ENCODE measurements at regions of chr3 and their contacts with region 1.

Region 1: DNA sequence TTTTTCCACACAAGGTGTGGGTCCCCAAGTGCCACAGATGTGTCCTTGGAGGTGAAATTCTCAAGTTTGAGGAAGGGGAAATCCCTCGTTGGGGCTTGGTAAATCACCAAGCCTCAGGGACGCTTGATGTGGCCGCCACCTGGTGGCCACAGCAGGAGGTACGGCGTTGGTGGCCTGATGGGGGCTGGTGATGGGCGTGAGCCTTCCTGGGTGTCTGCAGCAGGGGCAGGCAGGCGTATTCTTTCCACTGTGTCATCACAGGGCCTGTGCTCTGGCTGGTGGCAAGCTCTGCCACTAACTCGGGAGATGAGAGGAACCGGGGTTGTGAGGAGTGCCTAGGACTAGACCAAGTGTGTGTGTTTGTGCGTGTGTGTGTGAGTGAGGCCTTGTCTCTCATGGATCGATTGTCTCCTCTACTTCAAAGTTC is 4.2 kb downstream of the ACOX2 start:
- DNase-seq: peak; percentile 61 to 79 (median 71)
- H3K4me3 ChIP-seq: no peak overlapping the region
- H3K27ac ChIP-seq: no peak overlapping the region
- H3K4me1 ChIP-seq: peaks cover 17% of the 10 kb centered on the region
- H3K27me3 ChIP-seq: no peaks in the 10 kb centered on the region
- CTCF ChIP-seq: peak; percentile 74 to 82 (median 81)
- EP300 ChIP-seq: no peak
- POLR2A ChIP-seq: no peak

Region 2: DNA sequence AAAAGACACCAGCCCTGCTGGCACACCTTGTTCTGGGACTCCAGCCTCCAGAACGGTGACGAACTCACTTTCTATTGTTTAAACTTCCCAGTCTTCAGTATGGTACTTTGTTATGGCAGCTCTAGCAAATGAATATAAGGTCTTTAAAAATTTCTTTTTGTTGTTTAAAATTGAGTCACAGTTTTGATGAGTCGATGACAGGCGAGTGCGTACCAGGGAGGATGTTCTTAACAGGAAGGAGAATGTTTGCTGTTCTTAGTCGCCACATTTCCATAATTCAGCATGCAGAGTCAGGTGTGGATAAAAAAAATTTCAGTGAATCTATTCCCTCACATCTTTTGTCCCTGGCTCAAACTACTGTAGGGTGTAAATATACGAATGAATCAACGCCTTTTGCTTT is 334.4 kb before region 1 on chr3:
- intact Hi-C with region 1: loop called in 1 of 4 experiments (anchors 10 kb)
- DNase-seq: peak in 1 of 5 donors; percentile 1
- H3K4me3 ChIP-seq: no peak overlapping the region
- H3K27ac ChIP-seq: peak overlapping the region in 1 of 2 donors; percentile 2
- H3K4me1 ChIP-seq: peaks cover 4% of the 10 kb centered on the region
- H3K27me3 ChIP-seq: no peaks in the 10 kb centered on the region
- CTCF ChIP-seq: no peak
- EP300 ChIP-seq: no peak
- POLR2A ChIP-seq: no peak

Region 3: DNA sequence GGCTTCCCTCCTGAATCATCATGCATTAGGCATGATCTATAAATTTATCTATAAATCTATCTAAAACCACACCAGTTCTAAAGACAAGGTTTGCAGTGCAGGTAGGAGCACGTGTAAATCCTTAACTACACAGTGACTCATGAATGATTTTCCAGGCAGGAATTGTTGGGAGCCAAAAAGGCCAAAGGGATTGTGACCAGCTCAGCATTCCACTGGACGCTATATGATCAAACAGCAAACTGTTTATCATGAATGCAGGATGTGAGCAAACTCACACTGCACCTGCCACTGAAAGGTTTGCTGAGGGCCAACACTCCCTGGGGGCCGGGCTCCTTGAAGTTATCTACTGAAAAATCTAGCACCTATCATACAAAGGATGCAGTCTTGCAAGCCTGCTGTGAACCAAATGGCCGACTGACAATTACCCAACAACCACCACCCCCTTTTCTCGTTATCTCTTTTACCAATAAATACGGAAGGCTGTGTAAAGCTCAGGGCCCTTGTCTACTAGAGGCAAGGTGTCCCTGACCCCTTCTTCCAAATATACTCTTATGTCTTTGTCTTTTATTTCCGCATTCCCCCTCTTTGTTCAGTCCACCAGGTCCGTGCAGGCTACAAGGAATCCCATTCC is 310.6 kb before region 1 on chr3:
- intact Hi-C with region 1: no loop called
- DNase-seq: no peak
- H3K4me3 ChIP-seq: no peak overlapping the region
- H3K27ac ChIP-seq: no peak overlapping the region
- H3K4me1 ChIP-seq: peaks cover 2% of the 10 kb centered on the region
- H3K27me3 ChIP-seq: no peaks in the 10 kb centered on the region
- CTCF ChIP-seq: no peak
- EP300 ChIP-seq: no peak
- POLR2A ChIP-seq: no peak

Region 4: GRCh38 chr3:58305882-58306711 is 226.7 kb before region 1 on chr3 and contains the starts of genes HTD2 and RPP14:
- intact Hi-C with region 1: loop called in 1 of 4 experiments (anchors 5 kb)
- DNase-seq: peak; percentile 99
- H3K4me3 ChIP-seq: peak within 1 kb of the TSS; percentile 77
- H3K27ac ChIP-seq: peak within 1 kb of the TSS; percentile 92 to 99
- H3K4me1 ChIP-seq: peaks cover 10% of the 10 kb centered on the region
- H3K27me3 ChIP-seq: no peaks in the 10 kb centered on the region
- CTCF ChIP-seq: peak; percentile 92 to 98 (median 97)
- EP300 ChIP-seq: no peak
- POLR2A ChIP-seq: peak; percentile 71
- total RNA-seq, gene HTD2: 7.3 to 12.0 (median 9.1) TPM
- total RNA-seq, gene RPP14: 7.9 to 16.2 (median 15.0) TPM

Region 5: GRCh38 chr3:58324391-58325390 is 208.1 kb before region 1 on chr3:
- intact Hi-C with region 1: loop called in 2 of 4 experiments (anchors 5 to 10 kb)
- DNase-seq: no peak
- H3K4me3 ChIP-seq: no peak overlapping the region
- H3K27ac ChIP-seq: peak overlapping the region in 1 of 2 donors; percentile 60
- H3K4me1 ChIP-seq: peaks cover 10% of the 10 kb centered on the region
- H3K27me3 ChIP-seq: no peaks in the 10 kb centered on the region
- CTCF ChIP-seq: no peak
- EP300 ChIP-seq: no peak
- POLR2A ChIP-seq: no peak

Region 6: DNA sequence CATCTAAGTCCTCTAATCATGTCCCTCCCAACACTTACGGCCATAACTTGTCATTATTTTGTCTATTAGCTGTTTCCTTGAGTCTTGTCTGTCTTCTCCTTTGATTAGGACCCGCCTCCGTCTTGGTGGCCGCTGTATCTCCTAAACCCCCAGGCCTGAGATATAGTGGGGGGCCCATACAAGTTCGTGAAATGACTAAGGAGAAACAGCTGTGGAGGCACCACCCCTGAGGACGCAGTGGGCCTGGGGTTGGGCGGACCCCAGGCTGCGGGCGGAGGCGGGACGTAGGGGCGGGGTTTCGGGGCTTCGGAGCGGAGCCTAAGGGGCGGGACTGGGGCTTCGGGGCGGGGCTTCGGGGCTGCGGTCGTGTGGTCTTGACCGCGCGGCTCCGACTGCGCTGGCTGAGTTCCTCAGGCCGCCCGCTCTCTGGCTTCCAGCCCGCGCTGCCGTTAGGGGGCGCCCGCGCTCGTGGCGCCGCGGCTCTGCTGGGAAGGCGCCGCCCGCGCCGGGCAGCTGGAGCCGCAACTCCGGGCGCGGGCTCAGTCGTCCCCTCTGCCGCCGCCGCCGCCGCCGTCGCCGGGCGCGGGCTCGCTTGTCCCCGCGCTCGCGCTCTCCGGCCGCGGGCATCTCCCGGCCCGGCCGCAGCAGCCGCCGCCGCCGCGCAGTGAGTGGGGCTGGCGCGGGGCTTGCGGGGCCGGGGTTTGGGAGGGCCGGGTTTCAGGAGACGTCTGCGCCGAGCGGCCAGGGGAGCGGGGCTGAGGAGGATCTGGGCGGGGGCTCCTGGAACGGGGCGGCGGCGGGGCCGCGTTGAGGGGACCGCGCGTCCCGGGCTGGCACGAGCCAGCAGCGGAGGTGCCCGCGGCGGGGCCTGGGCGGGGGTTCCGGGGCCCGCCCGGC is 41.1 kb before region 1 on chr3 and contains the start of gene KCTD6:
- intact Hi-C with region 1: loop called in 1 of 4 experiments (anchors 5 kb)
- DNase-seq: peak; percentile 91 to 97 (median 95)
- H3K4me3 ChIP-seq: peak within 1 kb of the TSS; percentile 77
- H3K27ac ChIP-seq: peak within 1 kb of the TSS; percentile 66 to 71
- H3K4me1 ChIP-seq: peaks cover 12% of the 10 kb centered on the region
- H3K27me3 ChIP-seq: no peaks in the 10 kb centered on the region
- CTCF ChIP-seq: peak; percentile 24 to 79 (median 79)
- EP300 ChIP-seq: no peak
- POLR2A ChIP-seq: no peak
- total RNA-seq, gene KCTD6: 10.9 to 16.6 (median 13.0) TPM

Region 7: GRCh38 chr3:58560771-58561311 is 28.0 kb after region 1 on chr3:
- intact Hi-C with region 1: no loop called
- DNase-seq: peak in 1 of 5 donors; percentile 42
- H3K4me3 ChIP-seq: no peak overlapping the region
- H3K27ac ChIP-seq: no peak overlapping the region
- H3K4me1 ChIP-seq: peaks cover 2% of the 10 kb centered on the region
- H3K27me3 ChIP-seq: no peaks in the 10 kb centered on the region
- CTCF ChIP-seq: no peak
- EP300 ChIP-seq: no peak
- POLR2A ChIP-seq: no peak